Activated CD4-positive, alpha-beta memory T cell treated with anti-CD3 and anti-CD28 coated beads, Interleukin-2, amount 10 ng/mL, durations not matched to agents 7 days and 5 days (primary cell): ENCODE measurements at regions of chr20 and their contacts with region 1.

Region 1: DNA sequence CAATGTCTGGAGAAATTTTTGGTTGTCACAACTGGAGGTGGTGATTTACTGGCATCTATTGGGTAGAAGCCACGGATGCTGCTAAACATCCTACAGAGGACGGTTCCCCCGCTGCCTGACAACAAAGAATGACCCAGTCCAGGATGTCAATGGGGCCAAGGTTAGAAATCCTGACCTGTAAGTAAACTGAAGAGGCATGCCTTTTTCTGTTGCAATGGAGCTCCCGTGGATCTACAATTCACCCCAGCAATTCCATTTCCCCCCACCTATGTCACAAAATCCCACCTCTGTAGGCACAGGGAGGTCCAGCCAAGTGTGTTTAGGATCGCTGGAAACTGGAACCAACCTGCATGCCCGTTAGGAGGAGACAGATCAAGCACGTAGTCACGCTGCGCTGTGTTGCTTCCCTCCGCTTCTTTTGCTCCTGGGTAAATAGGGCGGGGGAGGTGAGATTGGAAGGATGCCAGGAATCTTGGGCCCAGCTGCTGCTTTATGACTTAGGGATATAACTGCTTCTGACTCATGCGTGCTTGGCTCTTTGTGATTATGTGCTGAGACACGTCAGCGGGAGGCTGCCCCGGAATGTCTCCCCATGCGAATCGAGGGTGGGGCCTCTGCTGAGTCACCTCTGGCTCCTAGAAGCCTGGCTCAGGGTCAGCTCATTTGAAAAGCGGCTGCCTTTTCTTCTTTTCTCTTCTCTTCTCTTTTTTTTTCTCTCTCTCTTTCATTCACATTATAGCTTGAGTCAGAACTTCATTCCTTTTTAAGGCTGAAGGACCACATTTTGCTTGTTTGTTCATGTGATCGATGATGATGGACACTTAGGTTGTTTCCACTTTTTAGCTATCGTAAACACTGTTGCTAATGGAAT is 12.4 kb upstream of the PEDS1 start:
- DNase-seq: peak; percentile 87
- H3K4me3 Mint-ChIP-seq: peak overlapping the region; percentile 76
- H3K27ac Mint-ChIP-seq: peak overlapping the region; percentile 84
- H3K4me1 Mint-ChIP-seq: peaks cover 16% of the 10 kb centered on the region
- H3K27me3 Mint-ChIP-seq: peaks cover 4% of the 10 kb centered on the region

Region 2: GRCh38 chr20:49982346-49983122 is 183.4 kb before region 1 on chr20 and contains the start of gene SNAI1:
- CTCF ChIA-PET with region 1: interaction called, 44 read pairs
- POLR2A ChIA-PET with region 1: interaction called, 4 read pairs
- DNase-seq: peak; percentile 81
- H3K4me3 Mint-ChIP-seq: peak within 1 kb of the TSS; percentile 41
- H3K27ac Mint-ChIP-seq: no peak within 1 kb of the TSS
- H3K4me1 Mint-ChIP-seq: peaks cover 26% of the 10 kb centered on the region
- H3K27me3 Mint-ChIP-seq: peaks cover 28% of the 10 kb centered on the region
- total RNA-seq, gene SNAI1: 0.28 to 0.38 TPM

Region 3: GRCh38 chr20:50120897-50121693 is 44.8 kb before region 1 on chr20:
- CTCF ChIA-PET with region 1: interaction called, 157 read pairs
- POLR2A ChIA-PET with region 1: interaction called, 11 read pairs
- DNase-seq: peak; percentile 72
- H3K4me3 Mint-ChIP-seq: no peak overlapping the region
- H3K27ac Mint-ChIP-seq: no peak overlapping the region
- H3K4me1 Mint-ChIP-seq: peaks cover 8% of the 10 kb centered on the region
- H3K27me3 Mint-ChIP-seq: no peaks in the 10 kb centered on the region

Region 4: GRCh38 chr20:50146732-50147662 is 18.9 kb before region 1 on chr20:
- CTCF ChIA-PET with region 1: interaction called, 38 read pairs
- POLR2A ChIA-PET with region 1: interaction called, 11 read pairs
- DNase-seq: peak; percentile 85
- H3K4me3 Mint-ChIP-seq: peak overlapping the region; percentile 76
- H3K27ac Mint-ChIP-seq: peak overlapping the region; percentile 96
- H3K4me1 Mint-ChIP-seq: peaks cover 76% of the 10 kb centered on the region
- H3K27me3 Mint-ChIP-seq: no peaks in the 10 kb centered on the region

Region 5: GRCh38 chr20:50179507-50180016 is 13.6 kb after region 1 on chr20:
- CTCF ChIA-PET with region 1: interaction called, 16 read pairs
- POLR2A ChIA-PET with region 1: no interaction called
- DNase-seq: no peak
- H3K4me3 Mint-ChIP-seq: no peak overlapping the region
- H3K27ac Mint-ChIP-seq: no peak overlapping the region
- H3K4me1 Mint-ChIP-seq: no peaks in the 10 kb centered on the region
- H3K27me3 Mint-ChIP-seq: peaks cover 8% of the 10 kb centered on the region